ENCODE measurements at regions of chr16 and their contacts with region 1.

Region 1: GRCh38 chr16:57485916-57486857 is at the start of gene DOK4:
- DNase-seq: peak; percentile 66
- H3K4me3 Mint-ChIP-seq: peak within 1 kb of the TSS; percentile 77
- H3K27ac Mint-ChIP-seq: no peak within 1 kb of the TSS
- H3K4me1 Mint-ChIP-seq: peaks cover 8% of the 10 kb centered on the region
- H3K27me3 Mint-ChIP-seq: peaks cover 10% of the 10 kb centered on the region
- total RNA-seq, gene DOK4: 5.7 and 6.6 TPM in 2 replicates

Region 2: GRCh38 chr16:57413301-57413730 is 72.9 kb before region 1 on chr16:
- intact Hi-C with region 1: no loop called
- DNase-seq: no peak
- H3K4me3 Mint-ChIP-seq: no peak overlapping the region
- H3K27ac Mint-ChIP-seq: peak overlapping the region; percentile 26
- H3K4me1 Mint-ChIP-seq: peaks cover 15% of the 10 kb centered on the region
- H3K27me3 Mint-ChIP-seq: no peaks in the 10 kb centered on the region

Region 3: GRCh38 chr16:57475711-57476339 is 10.4 kb before region 1 on chr16:
- intact Hi-C with region 1: loop called (anchors 1 kb)
- DNase-seq: peak; percentile 78
- H3K4me3 Mint-ChIP-seq: peak overlapping the region; percentile 47
- H3K27ac Mint-ChIP-seq: peak overlapping the region; percentile 52
- H3K4me1 Mint-ChIP-seq: peaks cover 12% of the 10 kb centered on the region
- H3K27me3 Mint-ChIP-seq: peaks cover 3% of the 10 kb centered on the region